Dorsolateral prefrontal cortex (tissue), 120 donors: ENCODE measurements at regions of chr16 and their contacts with region 1.

Region 1: DNA sequence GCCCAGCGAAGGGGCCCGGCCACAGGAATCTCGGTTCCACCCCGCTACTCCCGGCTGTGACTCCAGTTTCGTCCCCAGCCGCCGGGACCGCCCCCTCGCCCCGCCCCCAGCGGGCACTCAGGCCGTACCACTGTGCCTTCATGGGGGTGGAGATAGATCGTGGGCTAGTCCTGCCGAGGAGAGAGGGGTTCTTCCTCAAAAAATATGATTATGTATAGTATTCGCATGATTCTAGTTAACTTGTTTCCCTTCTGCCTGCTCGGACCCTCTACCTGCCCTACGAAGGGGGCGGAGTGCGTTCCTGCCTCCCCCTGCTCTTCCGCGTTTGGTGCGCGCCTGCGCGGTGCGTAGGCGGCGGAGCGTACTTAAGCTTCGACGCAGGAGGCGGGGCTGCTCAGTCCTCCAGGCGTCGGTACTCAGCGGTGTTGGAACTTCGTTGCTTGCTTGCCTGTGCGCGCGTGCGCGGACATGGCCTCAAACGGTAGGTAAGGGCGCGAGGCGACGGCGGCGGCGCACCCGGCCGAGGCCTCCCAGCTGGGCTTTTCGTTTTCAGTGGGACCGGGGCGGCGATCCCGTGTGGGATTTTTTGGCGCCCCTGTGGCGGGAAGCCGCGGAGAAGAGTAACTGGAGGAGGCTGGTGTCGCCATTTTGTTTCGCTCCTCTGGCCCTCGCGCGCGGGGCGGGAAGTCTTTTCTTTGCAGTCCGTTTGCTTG is at the start of gene FUS:
- DNase-seq: peak; percentile 86 to 92 (median 92)
- H3K4me3 ChIP-seq: peak within 1 kb of the TSS; percentile 67 to 100 (median 89)
- H3K27ac ChIP-seq: peak within 1 kb of the TSS; percentile 78 to 100 (median 98)
- H3K27me3 ChIP-seq: no peaks in the 10 kb centered on the region
- CTCF ChIP-seq: peak in 10 of 56 donors; percentile 8 to 25 (median 15)
- total RNA-seq, gene FUS: 158 to 315 (median 238) TPM

Region 2: DNA sequence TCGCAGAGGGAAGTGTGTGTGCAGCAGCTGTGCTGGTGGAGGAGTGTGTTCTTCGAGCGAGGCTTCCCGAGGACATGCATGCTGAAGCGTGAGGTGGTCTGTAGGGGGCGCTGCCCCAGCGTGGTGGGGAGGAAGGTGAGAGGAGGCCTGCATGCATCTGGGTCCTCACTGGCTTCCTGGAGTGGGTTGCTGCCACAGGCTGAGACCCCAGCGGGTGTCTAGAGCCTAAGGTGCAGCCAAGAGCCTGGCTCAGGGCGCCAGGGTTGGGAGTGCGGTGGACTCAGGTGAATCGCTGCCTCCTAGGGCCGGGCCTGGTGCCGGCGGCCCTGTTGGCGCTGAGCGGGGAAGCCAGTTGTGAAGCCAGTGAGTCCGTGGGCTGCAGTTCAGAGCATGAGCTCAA is 202.4 kb before region 1 on chr16:
- intact Hi-C with region 1: loop called (anchors 5 to 10 kb)
- DNase-seq: no peak
- H3K4me3 ChIP-seq: no peak overlapping the region
- H3K27ac ChIP-seq: no peak overlapping the region
- H3K27me3 ChIP-seq: no peaks in the 10 kb centered on the region
- CTCF ChIP-seq: peak in 6 of 56 donors; percentile 9 to 32 (median 20)

Region 3: DNA sequence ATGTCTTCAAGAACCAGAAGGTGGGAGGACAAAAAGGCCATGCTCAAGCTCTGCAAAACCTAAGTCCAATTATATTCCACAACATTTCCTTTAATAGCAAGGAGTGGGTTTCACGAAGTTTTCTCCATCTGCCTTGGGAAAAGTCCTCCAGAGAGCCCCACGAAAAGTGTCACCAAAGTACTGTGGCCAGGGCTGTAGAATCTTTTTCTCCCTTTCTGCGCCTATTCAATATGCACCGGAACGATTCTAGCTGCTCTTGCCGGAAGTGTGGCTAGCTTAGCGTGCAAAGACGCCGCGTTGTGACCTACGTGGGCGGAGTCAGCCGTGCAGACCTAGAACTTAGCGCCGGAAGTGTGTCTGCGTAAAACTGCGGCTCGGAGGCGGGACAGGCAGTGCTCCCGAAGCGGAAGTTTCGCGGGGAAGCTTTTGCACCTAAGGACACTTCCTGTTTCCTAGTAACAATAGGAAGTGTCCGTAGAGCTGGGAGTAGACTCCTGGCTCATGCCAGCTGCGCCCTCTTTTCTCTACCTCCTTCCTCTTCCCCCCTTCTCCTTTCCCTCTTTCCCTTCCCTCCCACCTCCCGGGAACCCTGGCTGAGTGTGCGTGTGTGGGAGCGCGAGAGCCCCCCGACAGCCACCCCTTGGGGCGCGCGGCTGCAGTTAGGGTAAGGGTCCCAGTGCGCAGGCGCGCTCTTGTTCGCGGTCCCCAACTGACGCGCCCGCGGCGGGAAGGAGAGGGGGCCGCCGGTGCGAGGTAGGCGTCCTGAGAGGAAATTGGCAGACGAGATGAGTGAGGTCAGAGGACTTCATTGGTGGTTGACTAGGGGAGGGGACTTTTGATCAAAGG is 105.7 kb before region 1 on chr16 and contains the starts of genes ZNF646 and ZNF668:
- intact Hi-C with region 1: loop called in 1 of 2 experiments (anchors 10 kb)
- DNase-seq: peak; percentile 98 to 100 (median 99)
- H3K4me3 ChIP-seq: peak within 1 kb of the TSS; percentile 74 to 99 (median 95)
- H3K27ac ChIP-seq: peak within 1 kb of the TSS; percentile 78 to 98 (median 95)
- H3K27me3 ChIP-seq: no peaks in the 10 kb centered on the region
- CTCF ChIP-seq: peak in 27 of 56 donors; percentile 5 to 44 (median 20)
- total RNA-seq, gene ZNF646: 11.2 to 24.3 (median 16.7) TPM
- total RNA-seq, gene ZNF668: 7.9 to 24.5 (median 12.5) TPM

Region 4: GRCh38 chr16:31142109-31143010 is 37.5 kb before region 1 on chr16:
- intact Hi-C with region 1: loop called (anchors 2 kb)
- DNase-seq: peak; percentile 89 to 98 (median 95)
- H3K4me3 ChIP-seq: peak overlapping the region; percentile 25 to 78 (median 64)
- H3K27ac ChIP-seq: peak overlapping the region in 58 of 59 donors; percentile 30 to 93 (median 82)
- H3K27me3 ChIP-seq: peaks cover 0 to 7% (median 0%) of the 10 kb centered on the region in 45 donors
- CTCF ChIP-seq: peak; percentile 71 to 98 (median 89)

Region 5: DNA sequence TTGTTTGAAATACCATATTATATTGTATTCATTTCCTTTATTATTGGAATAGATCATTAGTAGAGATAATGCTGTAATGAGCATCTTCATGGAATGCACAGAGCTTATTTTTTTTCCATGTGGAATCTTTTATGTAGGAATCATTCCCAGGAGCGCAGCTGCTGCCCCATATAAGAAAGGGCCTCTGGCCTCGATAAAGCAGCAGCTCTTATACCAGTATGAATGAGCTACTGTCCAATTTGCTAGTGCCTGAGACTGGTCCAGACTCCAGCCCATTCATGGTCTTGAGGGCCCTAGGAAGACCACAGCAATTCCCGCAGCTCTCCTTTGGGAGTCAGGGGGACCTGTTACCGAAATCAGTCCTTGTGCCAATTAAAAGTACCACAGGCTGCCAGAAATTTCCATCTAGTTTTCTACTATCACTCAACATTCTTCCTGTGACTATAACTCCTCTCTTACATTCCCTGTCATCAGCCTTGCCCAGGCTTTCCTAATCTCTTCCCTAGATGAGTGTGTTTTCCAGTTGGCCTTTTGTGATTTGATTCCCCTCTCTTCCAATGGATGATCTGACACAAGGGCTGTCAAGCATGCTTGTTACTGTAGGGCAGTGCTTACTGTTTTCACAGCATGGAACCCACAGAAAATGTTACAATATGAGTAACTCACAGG is 260.7 kb after region 1 on chr16:
- intact Hi-C with region 1: loop called in 1 of 2 experiments (anchors 5 kb)
- DNase-seq: peak in 2 of 10 donors; percentile 6 to 11
- H3K4me3 ChIP-seq: no peak overlapping the region
- H3K27ac ChIP-seq: peak overlapping the region in 40 of 59 donors; percentile 2 to 73 (median 46)
- H3K27me3 ChIP-seq: no peaks in the 10 kb centered on the region
- CTCF ChIP-seq: no peak